ENCODE measurements at regions of chr22 and their contacts with region 1.

Region 1: DNA sequence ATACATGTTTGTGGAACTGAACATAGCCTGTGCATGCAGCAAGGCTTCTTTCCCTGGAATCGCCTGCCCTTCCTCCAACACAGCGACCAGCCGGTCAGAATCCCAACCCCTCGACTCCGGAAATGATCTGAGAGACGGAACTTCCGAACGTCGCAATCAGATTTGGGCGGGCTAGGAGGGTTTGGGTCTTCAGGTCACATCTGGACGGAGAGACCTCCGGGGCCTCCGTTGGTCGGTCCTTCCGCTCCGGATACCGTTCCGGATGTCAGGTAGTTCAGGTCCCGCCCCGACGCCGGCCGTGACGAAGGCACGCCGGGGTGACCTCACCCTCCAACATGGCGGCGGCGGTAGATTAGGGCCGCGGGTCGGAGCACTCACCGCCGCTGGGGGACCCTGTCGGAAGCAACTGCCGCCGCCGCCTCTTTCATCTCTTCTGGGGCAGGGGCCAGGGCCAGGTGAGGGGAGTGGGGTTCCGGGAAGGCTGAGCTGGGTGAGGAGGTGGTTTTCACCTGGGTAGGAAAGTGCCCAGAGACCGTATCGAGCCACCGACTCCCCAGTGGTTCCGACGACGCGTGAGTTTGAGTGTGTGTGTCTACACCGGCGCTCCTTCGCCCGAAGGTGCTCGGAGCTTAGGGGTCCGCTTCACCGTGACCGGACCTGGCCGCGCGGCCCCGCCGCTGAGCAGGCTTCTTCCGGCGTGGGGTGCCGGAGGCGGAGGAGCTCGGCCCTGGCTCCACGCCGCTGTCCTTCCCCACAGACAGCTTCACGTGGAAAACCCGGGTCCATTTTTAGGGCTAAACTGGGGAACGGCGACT is at the start of gene BCL2L13:
- DNase-seq: peak; percentile 95
- ATAC-seq: peak; percentile 98
- total RNA-seq, gene BCL2L13: 51.2 to 59.7 TPM

Region 2: GRCh38 chr22:17569971-17570511 is 68.6 kb before region 1 on chr22:
- intact Hi-C with region 1: loop called in 1 of 2 experiments (anchors 5 kb)
- DNase-seq: peak; percentile 64
- ATAC-seq: peak; percentile 35 to 47

Region 3: GRCh38 chr22:17706018-17706900 is 67.6 kb after region 1 on chr22:
- intact Hi-C with region 1: no loop called
- DNase-seq: no peak
- ATAC-seq: peak; percentile 85 to 98

Measured in left cardiac atrium (tissue), 4 donors.